ENCODE measurements at regions of chr5 and their contacts with region 1.

Region 1: DNA sequence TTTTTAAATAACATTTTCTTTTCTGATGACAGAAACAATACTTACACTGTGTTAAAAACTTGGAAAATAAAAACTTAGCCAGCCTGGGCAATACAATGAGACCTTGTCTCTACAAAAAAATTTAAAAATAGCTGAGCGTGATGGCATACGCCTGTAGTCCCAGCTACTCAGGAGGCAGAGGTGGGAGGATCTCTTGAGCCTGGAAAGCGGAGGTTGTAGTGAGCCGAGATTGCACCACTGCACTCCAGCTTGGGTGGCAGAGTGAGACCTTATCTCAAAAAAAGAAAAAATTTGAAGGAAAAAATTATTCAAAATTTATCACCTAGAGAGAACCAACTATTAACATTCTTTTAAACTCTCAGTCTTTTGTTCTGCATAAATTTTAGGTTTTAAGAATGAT is 4.9 kb upstream of the CMYA5 start:
- DNase-seq: no peak
- CTCF ChIP-seq: no peak

Region 2: GRCh38 chr5:79346420-79346824 is 338.4 kb before region 1 on chr5:
- in situ Hi-C with region 1: no loop called
- DNase-seq: no peak
- CTCF ChIP-seq: no peak

Region 3: DNA sequence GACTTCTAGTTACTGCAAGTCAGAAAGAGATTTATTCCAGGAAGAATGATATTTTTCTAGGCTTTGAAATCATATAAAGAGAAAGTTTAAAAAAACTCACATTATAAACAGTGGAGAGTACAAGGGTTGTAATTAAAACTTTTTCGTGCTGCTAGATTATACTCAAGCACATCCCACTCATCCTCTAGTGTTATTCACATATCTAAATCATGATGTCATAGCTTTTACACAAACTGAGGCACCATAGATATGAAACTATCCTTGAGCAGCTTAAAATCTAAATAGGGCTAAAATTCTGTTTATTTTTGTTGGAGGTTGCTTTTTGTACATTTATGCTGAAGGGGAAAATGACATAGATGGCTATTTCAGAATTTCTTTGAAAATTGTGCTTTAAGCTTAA is 42.6 kb before region 1 on chr5:
- in situ Hi-C with region 1: loop called (anchors 5 kb)
- DNase-seq: no peak
- CTCF ChIP-seq: no peak